CD8-positive, alpha-beta T cell (primary cell): ENCODE measurements at regions of chr3 and their contacts with region 1.

Region 1: GRCh38 chr3:120795017-120795648 is 52.6 kb downstream of the GTF2E1 start:
- DNase-seq: peak; percentile 71 to 93 (median 80)
- ATAC-seq: peak; percentile 96
- H3K4me3 ChIP-seq: no peak overlapping the region
- H3K4me3 Mint-ChIP-seq: no peak overlapping the region
- H3K27ac ChIP-seq: no peak overlapping the region
- H3K27ac Mint-ChIP-seq: no peak overlapping the region
- H3K4me1 ChIP-seq: peaks cover 6% of the 10 kb centered on the region
- H3K4me1 Mint-ChIP-seq: peaks cover 12% of the 10 kb centered on the region
- H3K27me3 ChIP-seq: no peaks in the 10 kb centered on the region
- H3K27me3 Mint-ChIP-seq: no peaks in the 10 kb centered on the region
- CTCF ChIP-seq: peak; percentile 85

Region 2: DNA sequence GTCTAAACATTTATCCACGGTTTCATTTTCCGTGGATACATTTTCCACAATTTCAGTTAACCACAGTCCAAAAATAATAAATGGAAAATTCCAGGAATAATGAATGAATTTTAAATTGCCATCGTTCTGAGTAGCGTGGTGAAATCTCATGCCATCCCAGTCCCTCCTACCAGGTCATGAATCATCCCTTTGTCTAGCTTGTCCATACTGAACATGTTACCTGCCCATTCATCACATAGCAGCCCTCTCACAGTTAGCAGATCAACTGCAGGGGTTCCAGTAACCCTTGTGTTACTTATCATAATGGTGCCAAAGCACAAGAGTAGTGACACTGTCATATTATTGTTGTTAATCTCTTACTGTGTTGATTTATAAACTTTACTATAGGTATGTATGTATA is 825.4 kb before region 1 on chr3:
- CTCF ChIA-PET with region 1: no interaction called
- POLR2A ChIA-PET with region 1: no interaction called
- intact Hi-C with region 1: no loop called
- DNase-seq: no peak
- ATAC-seq: no peak
- H3K4me3 ChIP-seq: no peak overlapping the region
- H3K4me3 Mint-ChIP-seq: no peak overlapping the region
- H3K27ac ChIP-seq: no peak overlapping the region
- H3K27ac Mint-ChIP-seq: no peak overlapping the region
- H3K4me1 ChIP-seq: peaks cover 3% of the 10 kb centered on the region
- H3K4me1 Mint-ChIP-seq: peaks cover 39% of the 10 kb centered on the region
- H3K27me3 ChIP-seq: no peaks in the 10 kb centered on the region
- H3K27me3 Mint-ChIP-seq: no peaks in the 10 kb centered on the region
- CTCF ChIP-seq: no peak

Region 3: GRCh38 chr3:120245386-120245785 is 549.7 kb before region 1 on chr3:
- CTCF ChIA-PET with region 1: interaction called, 5 read pairs
- POLR2A ChIA-PET with region 1: no interaction called
- intact Hi-C with region 1: loop called (anchors 2 to 5 kb)
- DNase-seq: no peak
- ATAC-seq: no peak
- H3K4me3 ChIP-seq: no peak overlapping the region
- H3K4me3 Mint-ChIP-seq: no peak overlapping the region
- H3K27ac ChIP-seq: no peak overlapping the region
- H3K27ac Mint-ChIP-seq: no peak overlapping the region
- H3K4me1 ChIP-seq: no peaks in the 10 kb centered on the region
- H3K4me1 Mint-ChIP-seq: no peaks in the 10 kb centered on the region
- H3K27me3 ChIP-seq: peaks cover 0 to 3% of the 10 kb centered on the region in 2 experiments
- H3K27me3 Mint-ChIP-seq: peaks cover 17% of the 10 kb centered on the region
- CTCF ChIP-seq: no peak

Region 4: DNA sequence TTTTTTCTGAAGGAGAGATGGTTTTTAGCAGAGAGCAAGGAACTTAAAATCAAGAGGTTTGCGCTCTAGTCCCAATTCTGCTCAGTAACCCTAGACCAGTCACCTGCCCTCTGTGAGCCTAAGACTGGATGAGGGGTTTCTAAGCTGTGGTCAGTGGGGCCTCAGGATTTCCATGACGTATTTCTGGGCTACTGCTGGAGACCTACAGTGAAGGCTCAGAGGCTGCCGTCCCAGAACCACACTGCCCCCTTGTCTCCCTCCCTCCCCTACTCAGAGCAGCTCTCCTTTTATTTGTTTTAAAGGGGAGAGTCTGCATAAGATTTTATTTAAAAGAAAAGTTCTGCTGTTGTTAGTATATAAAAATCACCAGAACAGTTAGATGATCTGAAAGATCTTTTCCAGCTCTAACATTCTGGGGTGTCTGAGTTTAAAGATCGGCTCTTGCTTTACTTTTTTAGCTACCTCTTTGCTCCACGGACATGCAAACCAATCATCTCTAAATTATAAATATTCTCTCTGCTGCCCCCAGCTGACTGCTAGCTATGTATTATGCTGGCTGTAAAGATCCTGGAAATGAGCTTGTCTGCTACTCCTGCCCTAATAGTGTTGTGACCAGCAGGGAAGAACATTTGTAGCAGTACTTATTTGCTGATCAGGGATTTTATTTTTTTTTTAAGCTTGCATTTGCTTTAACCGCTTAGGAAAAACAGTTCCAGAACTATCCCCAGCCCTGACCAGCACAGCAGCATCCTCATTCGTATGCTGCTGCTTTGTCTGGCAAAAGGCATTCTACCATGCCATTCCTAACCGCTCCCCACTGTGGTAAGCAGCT is 227.5 kb before region 1 on chr3:
- CTCF ChIA-PET with region 1: interaction called, 54 read pairs
- POLR2A ChIA-PET with region 1: no interaction called
- intact Hi-C with region 1: no loop called
- DNase-seq: peak in 2 of 9 experiments; percentile 31 to 41
- ATAC-seq: no peak
- H3K4me3 ChIP-seq: no peak overlapping the region
- H3K4me3 Mint-ChIP-seq: peak overlapping the region; percentile 54
- H3K27ac ChIP-seq: no peak overlapping the region
- H3K27ac Mint-ChIP-seq: no peak overlapping the region
- H3K4me1 ChIP-seq: no peaks in the 10 kb centered on the region
- H3K4me1 Mint-ChIP-seq: no peaks in the 10 kb centered on the region
- H3K27me3 ChIP-seq: peaks cover 0 to 3% of the 10 kb centered on the region in 2 experiments
- H3K27me3 Mint-ChIP-seq: peaks cover 11% of the 10 kb centered on the region
- CTCF ChIP-seq: peak; percentile 25

Region 5: GRCh38 chr3:120765830-120766493 is 29.2 kb before region 1 on chr3:
- CTCF ChIA-PET with region 1: interaction called, 22 read pairs
- POLR2A ChIA-PET with region 1: no interaction called
- intact Hi-C with region 1: no loop called
- DNase-seq: no peak
- ATAC-seq: no peak
- H3K4me3 ChIP-seq: no peak overlapping the region
- H3K4me3 Mint-ChIP-seq: no peak overlapping the region
- H3K27ac ChIP-seq: no peak overlapping the region
- H3K27ac Mint-ChIP-seq: no peak overlapping the region
- H3K4me1 ChIP-seq: peaks cover 7% of the 10 kb centered on the region
- H3K4me1 Mint-ChIP-seq: peaks cover 66% of the 10 kb centered on the region
- H3K27me3 ChIP-seq: no peaks in the 10 kb centered on the region
- H3K27me3 Mint-ChIP-seq: no peaks in the 10 kb centered on the region
- CTCF ChIP-seq: no peak

Region 6: DNA sequence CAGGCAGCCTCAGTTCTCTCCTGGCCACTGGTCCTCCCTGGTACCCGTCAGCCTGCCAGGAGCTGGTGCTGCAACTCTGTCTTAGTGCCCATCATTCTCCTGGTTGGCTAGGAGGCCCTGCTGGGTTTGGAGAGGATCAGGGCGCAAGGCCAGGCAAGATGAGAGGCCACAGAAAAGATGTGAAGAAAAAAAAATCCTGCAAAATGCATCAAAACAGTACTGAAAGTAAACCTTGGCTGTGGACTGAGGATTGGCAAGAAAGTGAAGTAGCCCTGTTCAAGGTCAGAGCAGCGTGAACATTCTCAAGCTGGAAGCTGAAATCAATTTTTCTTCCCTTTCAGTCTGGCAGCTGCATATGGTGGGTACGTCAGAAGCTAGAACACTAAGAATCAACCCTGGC is 21.6 kb after region 1 on chr3:
- CTCF ChIA-PET with region 1: interaction called, 12 read pairs
- POLR2A ChIA-PET with region 1: no interaction called
- intact Hi-C with region 1: no loop called
- DNase-seq: no peak
- ATAC-seq: no peak
- H3K4me3 ChIP-seq: no peak overlapping the region
- H3K4me3 Mint-ChIP-seq: no peak overlapping the region
- H3K27ac ChIP-seq: no peak overlapping the region
- H3K27ac Mint-ChIP-seq: no peak overlapping the region
- H3K4me1 ChIP-seq: no peaks in the 10 kb centered on the region
- H3K4me1 Mint-ChIP-seq: no peaks in the 10 kb centered on the region
- H3K27me3 ChIP-seq: no peaks in the 10 kb centered on the region
- H3K27me3 Mint-ChIP-seq: peaks cover 27% of the 10 kb centered on the region
- CTCF ChIP-seq: no peak

Region 7: GRCh38 chr3:121477589-121477988 is 682.5 kb after region 1 on chr3:
- CTCF ChIA-PET with region 1: no interaction called
- POLR2A ChIA-PET with region 1: no interaction called
- intact Hi-C with region 1: no loop called
- DNase-seq: no peak
- ATAC-seq: no peak
- H3K4me3 ChIP-seq: no peak overlapping the region
- H3K4me3 Mint-ChIP-seq: no peak overlapping the region
- H3K27ac ChIP-seq: no peak overlapping the region
- H3K27ac Mint-ChIP-seq: no peak overlapping the region
- H3K4me1 ChIP-seq: no peaks in the 10 kb centered on the region
- H3K4me1 Mint-ChIP-seq: no peaks in the 10 kb centered on the region
- H3K27me3 ChIP-seq: no peaks in the 10 kb centered on the region
- H3K27me3 Mint-ChIP-seq: no peaks in the 10 kb centered on the region
- CTCF ChIP-seq: no peak